ENCODE measurements at regions of chr22 and their contacts with region 1.

Region 1: DNA sequence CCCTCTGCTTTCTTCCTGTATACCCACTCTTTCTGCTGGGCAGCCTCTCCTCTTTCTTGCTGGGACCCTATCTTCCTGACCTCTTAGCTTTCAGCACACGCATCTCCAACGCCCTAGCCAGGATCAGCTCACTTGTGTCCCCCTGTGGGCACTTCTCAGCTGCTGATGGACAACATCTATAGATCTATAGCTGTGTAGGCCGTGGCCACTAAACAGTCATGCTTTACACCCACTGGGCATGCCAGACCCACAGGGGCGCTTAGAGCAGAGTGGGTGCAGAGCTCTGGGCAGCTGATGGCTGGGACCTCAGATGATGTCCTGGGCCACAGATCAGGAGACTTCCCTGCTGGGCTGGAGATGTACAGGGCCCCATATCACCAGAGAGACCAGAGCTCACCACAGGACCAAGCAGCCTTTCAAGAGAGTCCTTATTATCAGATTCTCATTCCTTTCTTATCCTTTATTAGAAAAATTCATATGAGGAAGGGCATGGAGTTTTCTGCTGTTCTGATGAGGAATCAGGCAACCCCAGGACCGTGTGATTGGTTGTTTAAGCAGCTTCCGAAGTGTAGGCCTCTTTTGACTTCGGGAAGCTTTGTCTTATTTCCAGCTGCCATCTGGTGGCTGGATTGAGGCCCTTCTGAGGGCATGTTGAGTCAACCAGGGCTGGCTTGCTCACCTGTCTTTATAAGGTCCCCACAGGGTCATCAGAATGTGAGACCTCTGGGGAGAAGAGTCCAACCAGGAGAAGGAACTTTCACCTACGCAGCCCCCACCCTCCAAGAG is 60.5 kb downstream of the OSBP2 start:
- DNase-seq: peak; percentile 66
- ATAC-seq: peak; percentile 93
- H3K4me3 Mint-ChIP-seq: no peak overlapping the region
- H3K27ac Mint-ChIP-seq: no peak overlapping the region
- H3K4me1 Mint-ChIP-seq: peaks cover 11% of the 10 kb centered on the region
- H3K27me3 Mint-ChIP-seq: no peaks in the 10 kb centered on the region
- CTCF ChIP-seq: peak; percentile 32; the same call in 1 of the 2 replicates

Region 2: GRCh38 chr22:30606455-30607299 is 148.5 kb before region 1 on chr22 and contains the start of gene TCN2:
- CTCF ChIA-PET with region 1: interaction called, 11 read pairs
- POLR2A ChIA-PET with region 1: interaction called, 3 read pairs
- DNase-seq: peak; percentile 89
- ATAC-seq: peak; percentile 85
- H3K4me3 Mint-ChIP-seq: peak within 1 kb of the TSS; percentile 81
- H3K27ac Mint-ChIP-seq: peak within 1 kb of the TSS; percentile 99
- H3K4me1 Mint-ChIP-seq: peaks cover 40% of the 10 kb centered on the region
- H3K27me3 Mint-ChIP-seq: no peaks in the 10 kb centered on the region
- CTCF ChIP-seq: no peak
- total RNA-seq, gene TCN2: 34.7 to 39.0 TPM (median 36.7 TPM) in 3 replicates

Region 3: GRCh38 chr22:30667494-30668385 is 87.4 kb before region 1 on chr22 and contains the start of gene DUSP18:
- CTCF ChIA-PET with region 1: interaction called, 17 read pairs
- POLR2A ChIA-PET with region 1: no interaction called
- DNase-seq: peak; percentile 98
- ATAC-seq: peak; percentile 98
- H3K4me3 Mint-ChIP-seq: peak within 1 kb of the TSS; percentile 84
- H3K27ac Mint-ChIP-seq: peak within 1 kb of the TSS; percentile 52; the same call in 1 of the 2 replicates
- H3K4me1 Mint-ChIP-seq: peaks cover 12% of the 10 kb centered on the region
- H3K27me3 Mint-ChIP-seq: peaks cover 36% of the 10 kb centered on the region
- CTCF ChIP-seq: peak; percentile 37; the same call in 1 of the 2 replicates
- total RNA-seq, gene DUSP18: 4.2 to 4.4 TPM (median 4.3 TPM) in 3 replicates

Region 4: DNA sequence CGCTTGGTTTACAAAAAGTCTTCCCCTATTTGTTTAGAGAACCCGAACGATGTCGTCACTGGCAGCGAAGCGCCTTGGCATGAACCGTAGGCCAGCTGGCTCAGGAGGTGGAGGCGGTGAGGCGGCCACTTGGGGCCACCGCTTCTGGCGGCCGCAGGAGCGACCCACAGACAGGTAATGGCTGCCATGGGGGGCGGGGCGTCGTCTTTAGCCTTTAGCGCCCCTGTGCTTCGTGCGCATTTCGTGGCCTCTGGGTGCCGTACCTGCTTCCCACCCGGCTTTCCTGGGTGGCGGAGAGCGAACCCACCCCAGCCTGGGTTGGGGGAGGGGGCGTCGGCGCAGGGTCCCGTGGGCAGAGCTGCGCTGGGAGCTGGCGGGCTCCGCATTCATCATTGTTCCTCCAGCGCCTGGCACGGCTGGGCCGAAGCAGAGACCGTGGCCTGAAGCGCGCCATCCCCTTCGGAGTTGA is 61.0 kb before region 1 on chr22:
- CTCF ChIA-PET with region 1: interaction called, 13 read pairs
- POLR2A ChIA-PET with region 1: no interaction called
- DNase-seq: peak; percentile 66
- ATAC-seq: peak; percentile 70
- H3K4me3 Mint-ChIP-seq: peak overlapping the region; percentile 79
- H3K27ac Mint-ChIP-seq: 0 out of 2 replicates have a peak overlapping the region, but pooled peaks have one; percentile 62
- H3K4me1 Mint-ChIP-seq: peaks cover 16% of the 10 kb centered on the region
- H3K27me3 Mint-ChIP-seq: peaks cover 27% of the 10 kb centered on the region
- CTCF ChIP-seq: no peak

Region 5: DNA sequence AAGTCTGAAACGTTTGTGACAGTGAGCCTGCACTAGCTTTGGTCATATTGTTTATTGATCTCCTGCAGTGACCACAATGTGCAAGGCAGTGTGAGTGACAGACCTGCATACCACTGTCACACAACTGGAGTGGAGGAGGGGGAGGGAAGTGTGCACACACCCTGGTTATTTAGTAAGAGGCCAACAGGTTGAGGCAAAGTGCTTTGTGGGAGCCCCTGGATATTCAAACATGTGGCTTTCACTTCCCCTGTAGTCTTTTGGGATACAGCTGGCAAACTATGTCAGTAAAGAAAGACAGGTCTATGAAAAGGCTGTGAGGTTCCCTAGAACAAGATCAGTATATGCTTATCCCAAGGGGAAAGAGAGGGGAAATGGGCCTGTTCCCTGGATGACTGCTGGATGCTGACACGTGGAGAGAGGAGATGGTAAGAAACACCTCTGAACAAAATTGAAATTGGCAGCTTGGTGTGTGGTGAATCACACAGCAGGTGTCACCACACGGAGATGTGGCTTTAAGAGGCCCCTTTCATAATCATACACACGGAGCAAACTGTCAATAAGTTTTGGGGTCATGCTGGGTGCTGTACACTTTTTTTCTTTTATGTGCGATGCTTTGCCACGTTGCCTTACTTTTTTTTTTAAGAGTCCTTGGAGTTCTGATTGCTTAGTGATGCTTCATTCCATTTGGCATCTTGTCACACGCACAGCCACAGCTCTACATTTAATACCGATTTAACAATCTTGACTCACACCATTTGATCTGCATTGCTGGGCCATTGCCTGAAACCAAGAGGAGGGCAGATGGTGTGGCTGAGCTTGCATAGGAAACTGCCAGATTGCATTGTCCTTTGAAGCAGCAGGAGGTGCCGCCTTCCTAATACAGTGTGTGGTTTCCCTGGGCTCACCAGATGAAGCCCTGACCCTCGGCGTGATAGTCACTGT is 49.2 kb before region 1 on chr22:
- CTCF ChIA-PET with region 1: interaction called, 10 read pairs
- POLR2A ChIA-PET with region 1: no interaction called
- DNase-seq: no peak
- ATAC-seq: peak; percentile 46; the same call in 1 of the 2 replicates
- H3K4me3 Mint-ChIP-seq: no peak overlapping the region
- H3K27ac Mint-ChIP-seq: peak overlapping the region; percentile 5; the same call in 1 of the 2 replicates
- H3K4me1 Mint-ChIP-seq: peaks cover 15% of the 10 kb centered on the region
- H3K27me3 Mint-ChIP-seq: no peaks in the 10 kb centered on the region
- CTCF ChIP-seq: no peak